Panc1 (cell line): ENCODE measurements at regions of chr6 and their contacts with region 1.

Region 1: GRCh38 chr6:52407467-52407866 is 12.7 kb upstream of the EFHC1 start:
- DNase-seq: no peak
- ATAC-seq: peak; percentile 85
- H3K4me3 ChIP-seq: no peak overlapping the region
- H3K27ac ChIP-seq: no peak overlapping the region
- H3K4me1 ChIP-seq: no peaks in the 10 kb centered on the region
- H3K27me3 ChIP-seq: no peaks in the 10 kb centered on the region
- CTCF ChIP-seq: peak; percentile 69; the same call in 1 of the 2 replicates

Region 2: GRCh38 chr6:52340603-52340880 is 66.9 kb before region 1 on chr6:
- CTCF ChIA-PET with region 1: no interaction called
- POLR2A ChIA-PET with region 1: no interaction called
- in situ Hi-C with region 1: no loop called
- intact Hi-C with region 1: no loop called
- DNase-seq: no peak
- ATAC-seq: no peak
- H3K4me3 ChIP-seq: no peak overlapping the region
- H3K27ac ChIP-seq: no peak overlapping the region
- H3K4me1 ChIP-seq: peaks cover 6% of the 10 kb centered on the region; the same call in 1 of the 2 replicates
- H3K27me3 ChIP-seq: no peaks in the 10 kb centered on the region
- CTCF ChIP-seq: no peak

Region 3: DNA sequence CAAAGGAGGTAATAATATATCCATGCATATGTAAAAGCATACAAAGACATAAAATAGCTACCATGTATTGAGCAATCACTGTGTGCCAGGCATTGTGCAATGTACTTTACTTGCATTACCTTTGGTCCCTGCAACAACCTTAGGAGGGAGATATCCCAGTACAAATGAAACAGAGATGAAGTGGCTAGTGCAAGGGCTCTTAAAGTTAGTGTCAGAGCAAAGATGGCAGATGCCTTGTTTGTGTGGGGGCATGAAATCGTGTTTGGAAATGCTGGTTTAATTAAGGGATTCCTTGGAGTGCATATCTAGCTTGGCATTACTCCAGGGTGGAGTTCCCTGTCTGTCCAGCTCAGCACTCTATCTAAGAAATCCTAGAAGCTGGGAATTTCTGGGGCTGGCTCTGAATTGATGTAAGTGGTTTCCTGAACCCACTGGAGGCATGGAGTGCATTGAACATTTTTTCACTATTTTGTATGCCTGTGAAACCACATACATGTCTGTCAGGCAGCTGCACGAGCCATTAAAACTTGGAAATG is 35.7 kb before region 1 on chr6:
- CTCF ChIA-PET with region 1: interaction called, 10 read pairs
- POLR2A ChIA-PET with region 1: no interaction called
- in situ Hi-C with region 1: no loop called
- intact Hi-C with region 1: no loop called
- DNase-seq: no peak
- ATAC-seq: no peak
- H3K4me3 ChIP-seq: no peak overlapping the region
- H3K27ac ChIP-seq: no peak overlapping the region
- H3K4me1 ChIP-seq: no peaks in the 10 kb centered on the region
- H3K27me3 ChIP-seq: no peaks in the 10 kb centered on the region
- CTCF ChIP-seq: no peak

Region 4: GRCh38 chr6:52389626-52390360 is 17.7 kb before region 1 on chr6:
- CTCF ChIA-PET with region 1: interaction called, 10 read pairs
- POLR2A ChIA-PET with region 1: interaction called, 3 read pairs
- in situ Hi-C with region 1: no loop called
- intact Hi-C with region 1: no loop called
- DNase-seq: no peak
- ATAC-seq: peak; percentile 75
- H3K4me3 ChIP-seq: peak overlapping the region in 1 of 2 experiments; percentile 19; a peak in 1 of 4 replicates
- H3K27ac ChIP-seq: peak overlapping the region; percentile 81
- H3K4me1 ChIP-seq: peaks cover 15% of the 10 kb centered on the region
- H3K27me3 ChIP-seq: no peaks in the 10 kb centered on the region
- CTCF ChIP-seq: no peak

Region 5: DNA sequence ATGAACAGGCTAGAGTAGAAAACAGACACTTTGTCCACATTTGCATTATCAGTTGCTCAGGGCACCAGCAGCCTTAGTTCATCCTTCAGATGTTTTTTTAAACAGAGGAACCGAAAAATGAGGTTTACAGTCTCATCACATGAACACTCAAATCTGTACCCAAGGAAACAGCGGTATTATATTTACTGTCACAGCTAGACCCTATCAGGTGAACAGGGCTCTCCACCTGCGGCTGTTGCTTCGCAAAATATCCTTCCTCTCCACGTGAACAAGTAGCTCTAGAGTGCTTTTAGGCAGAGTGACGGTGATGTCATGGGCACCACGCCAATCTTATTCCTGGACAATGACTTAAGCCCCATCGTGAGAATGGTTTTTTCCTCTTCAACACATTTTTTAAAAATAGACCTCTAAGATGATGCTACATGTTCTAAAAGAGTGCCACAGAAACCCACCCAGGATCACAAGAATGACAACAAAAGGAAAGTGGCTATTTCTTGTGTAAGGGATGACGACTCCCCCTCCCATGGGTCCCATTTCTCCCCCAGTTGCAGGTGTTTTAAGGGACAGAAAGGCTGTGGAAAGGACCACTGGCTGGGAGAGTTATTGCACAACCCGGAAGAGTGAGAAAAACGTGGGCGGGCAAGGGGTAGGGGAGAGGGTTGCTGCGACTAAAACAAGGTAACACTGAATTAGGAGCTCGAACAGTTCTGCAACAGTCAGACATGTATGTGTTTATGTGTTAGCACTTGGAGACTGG is 90.4 kb after region 1 on chr6:
- CTCF ChIA-PET with region 1: interaction called, 18 read pairs
- POLR2A ChIA-PET with region 1: no interaction called
- in situ Hi-C with region 1: no loop called
- intact Hi-C with region 1: no loop called
- DNase-seq: no peak
- ATAC-seq: no peak
- H3K4me3 ChIP-seq: no peak overlapping the region
- H3K27ac ChIP-seq: 0 out of 2 replicates have a peak overlapping the region, but pooled peaks have one; percentile 18
- H3K4me1 ChIP-seq: peaks cover 2% of the 10 kb centered on the region; the same call in 1 of the 2 replicates
- H3K27me3 ChIP-seq: no peaks in the 10 kb centered on the region
- CTCF ChIP-seq: no peak